ENCODE measurements at regions of chr18 and their contacts with region 1.

Region 1: DNA sequence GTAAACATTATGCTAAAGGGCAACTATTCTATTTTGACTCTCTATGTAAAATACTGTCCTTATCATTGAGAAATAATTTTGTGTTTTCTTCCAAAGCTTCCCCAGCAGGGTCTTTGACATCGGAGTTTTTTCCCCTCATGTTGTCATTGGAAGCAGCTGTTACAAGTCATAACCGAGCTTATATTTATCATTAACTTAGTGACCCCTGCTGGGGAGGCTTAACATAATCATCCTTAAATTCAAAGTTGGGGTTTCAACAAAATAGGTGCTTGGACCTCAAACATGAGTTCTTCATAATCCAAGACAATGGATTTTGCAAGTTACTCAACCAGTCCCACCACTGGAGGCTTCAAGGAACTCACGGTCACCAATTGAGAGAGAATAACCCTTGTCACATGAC is 330.9 kb downstream of the DCC start:
- DNase-seq: peak in 4 of 42 donors; percentile 8 to 48 (median 34)

Region 2: GRCh38 chr18:51668101-51668500 is 1002.8 kb before region 1 on chr18:
- intact Hi-C with region 1: loop called (anchors 10 kb)
- DNase-seq: peak; percentile 46 to 91 (median 80)